Activated B cell treated with CpG ODN at 0.5 μM for 24 hours (primary cell): ENCODE measurements at regions of chr2 and their contacts with region 1.

Region 1: DNA sequence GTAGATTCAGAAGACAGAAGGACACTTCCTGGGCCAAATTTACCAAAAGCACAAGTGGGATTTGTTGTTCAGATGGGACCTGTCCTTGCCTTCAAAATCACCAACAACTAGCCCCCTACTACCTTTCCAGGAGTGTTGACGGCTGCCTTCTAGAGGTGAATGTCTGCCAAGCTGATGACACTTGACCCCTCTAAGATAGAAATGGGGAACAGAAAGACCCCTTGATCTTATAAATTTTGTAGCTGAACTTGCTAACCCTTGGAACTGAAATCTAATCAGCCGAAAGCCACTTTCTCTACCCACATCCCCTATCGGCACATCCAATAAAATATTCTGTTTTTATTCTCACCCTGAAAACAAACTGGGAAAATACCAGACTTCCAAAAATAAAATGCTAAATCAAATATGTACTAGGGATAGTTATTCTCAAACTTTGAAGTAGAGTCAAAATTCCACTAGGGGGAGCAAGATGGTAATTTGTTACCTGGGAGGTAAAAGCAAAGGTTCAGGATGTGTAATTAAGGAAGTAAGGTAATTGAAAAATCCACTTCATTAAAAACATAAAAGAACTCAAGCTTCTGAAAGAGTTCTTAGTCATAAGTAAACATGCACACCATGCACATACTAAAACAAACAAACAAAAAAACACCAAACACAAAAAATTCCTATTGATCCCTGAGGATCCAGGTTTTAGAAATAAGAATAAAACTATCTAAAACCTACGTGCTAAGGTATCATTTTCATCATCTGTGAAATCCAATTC is 119.2 kb downstream of the ANKRD44 start:
- DNase-seq: no peak
- ATAC-seq: peak; percentile 70
- H3K4me3 Mint-ChIP-seq: no peak overlapping the region
- H3K27ac Mint-ChIP-seq: peak overlapping the region; percentile 79
- H3K4me1 Mint-ChIP-seq: peaks cover 67% of the 10 kb centered on the region
- H3K27me3 Mint-ChIP-seq: no peaks in the 10 kb centered on the region
- CTCF ChIP-seq: peak; percentile 68

Region 2: DNA sequence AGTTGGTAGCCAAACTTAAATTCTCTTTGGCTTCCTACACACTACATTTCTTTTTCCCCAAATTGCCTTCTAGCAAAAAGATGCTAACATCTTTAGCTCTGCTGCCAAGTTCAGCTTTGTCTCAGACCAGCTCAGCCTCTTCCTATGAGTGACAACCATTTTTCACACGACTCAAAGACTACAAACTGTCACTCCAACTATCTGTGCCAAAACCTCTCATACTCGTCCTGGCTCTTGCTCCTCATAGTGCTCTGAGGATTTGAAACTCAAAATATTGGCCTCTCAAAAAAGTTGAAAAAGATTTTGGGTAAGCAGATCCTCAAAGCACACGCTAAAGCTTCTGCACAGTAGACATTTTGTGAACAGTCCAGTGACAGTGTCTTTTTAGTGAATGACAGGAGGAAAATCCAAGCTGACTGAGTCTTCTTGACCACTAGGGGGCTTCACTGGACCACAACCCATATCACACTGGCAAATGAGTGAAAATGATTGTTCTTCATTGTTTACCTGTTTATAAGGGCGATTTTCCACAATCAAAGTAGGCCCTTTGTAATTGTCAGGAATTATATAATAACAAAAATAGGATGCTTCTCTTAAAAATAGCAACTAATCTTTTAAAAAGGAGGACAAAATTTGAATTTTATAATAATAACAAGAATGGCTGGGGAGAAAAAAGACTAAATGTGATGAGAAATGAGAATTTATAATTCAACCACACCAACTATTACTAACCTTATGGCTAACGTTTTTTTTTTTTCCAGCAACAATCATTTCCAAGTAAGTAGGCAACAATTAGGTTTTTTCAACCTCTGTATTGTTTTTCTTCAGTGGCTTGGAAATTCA is 179.3 kb before region 1 on chr2:
- CTCF ChIA-PET with region 1: no interaction called
- POLR2A ChIA-PET with region 1: no interaction called
- intact Hi-C with region 1: loop called (anchors 5 kb)
- DNase-seq: no peak
- ATAC-seq: peak; percentile 57
- H3K4me3 Mint-ChIP-seq: no peak overlapping the region
- H3K27ac Mint-ChIP-seq: peak overlapping the region; percentile 74
- H3K4me1 Mint-ChIP-seq: peaks cover 5% of the 10 kb centered on the region
- H3K27me3 Mint-ChIP-seq: no peaks in the 10 kb centered on the region
- CTCF ChIP-seq: no peak

Region 3: DNA sequence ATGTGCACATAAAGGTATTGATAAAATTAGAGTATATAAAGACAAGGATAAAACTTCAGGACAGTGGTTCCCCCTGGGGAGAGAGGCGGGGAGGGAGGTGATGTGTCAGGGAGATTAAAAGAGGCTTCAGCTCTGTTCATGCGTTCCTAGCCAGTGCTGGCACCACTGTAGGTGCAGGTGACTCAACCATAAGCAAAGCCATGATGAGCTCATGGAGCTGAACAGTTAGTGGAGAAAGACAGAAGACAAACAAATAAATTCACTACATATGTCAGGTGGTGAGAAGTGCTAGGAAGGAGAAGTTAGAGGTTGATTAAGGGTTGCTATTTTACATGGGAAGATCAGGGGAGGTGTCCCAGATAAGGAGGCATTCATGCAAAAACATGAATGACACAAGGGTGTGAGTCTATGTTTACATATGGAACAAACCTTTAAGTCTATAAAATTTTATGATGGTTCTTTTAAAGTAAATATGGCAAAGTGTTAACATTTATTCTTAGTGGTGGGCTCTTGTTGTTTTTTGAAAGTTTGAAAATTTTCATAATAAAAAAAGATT is 16.7 kb before region 1 on chr2:
- CTCF ChIA-PET with region 1: interaction called, 9 read pairs
- POLR2A ChIA-PET with region 1: interaction called, 3 read pairs
- intact Hi-C with region 1: loop called (anchors 2 kb)
- DNase-seq: no peak
- ATAC-seq: peak; percentile 45
- H3K4me3 Mint-ChIP-seq: no peak overlapping the region
- H3K27ac Mint-ChIP-seq: peak overlapping the region; percentile 68
- H3K4me1 Mint-ChIP-seq: peaks cover 72% of the 10 kb centered on the region
- H3K27me3 Mint-ChIP-seq: no peaks in the 10 kb centered on the region
- CTCF ChIP-seq: no peak

Region 4: GRCh38 chr2:197255543-197255942 is 64.2 kb after region 1 on chr2:
- CTCF ChIA-PET with region 1: interaction called, 18 read pairs
- POLR2A ChIA-PET with region 1: interaction called, 11 read pairs
- intact Hi-C with region 1: no loop called
- DNase-seq: peak; percentile 74
- ATAC-seq: peak; percentile 95
- H3K4me3 Mint-ChIP-seq: peak overlapping the region; percentile 77
- H3K27ac Mint-ChIP-seq: peak overlapping the region; percentile 94
- H3K4me1 Mint-ChIP-seq: peaks cover 78% of the 10 kb centered on the region
- H3K27me3 Mint-ChIP-seq: no peaks in the 10 kb centered on the region
- CTCF ChIP-seq: no peak

Region 5: DNA sequence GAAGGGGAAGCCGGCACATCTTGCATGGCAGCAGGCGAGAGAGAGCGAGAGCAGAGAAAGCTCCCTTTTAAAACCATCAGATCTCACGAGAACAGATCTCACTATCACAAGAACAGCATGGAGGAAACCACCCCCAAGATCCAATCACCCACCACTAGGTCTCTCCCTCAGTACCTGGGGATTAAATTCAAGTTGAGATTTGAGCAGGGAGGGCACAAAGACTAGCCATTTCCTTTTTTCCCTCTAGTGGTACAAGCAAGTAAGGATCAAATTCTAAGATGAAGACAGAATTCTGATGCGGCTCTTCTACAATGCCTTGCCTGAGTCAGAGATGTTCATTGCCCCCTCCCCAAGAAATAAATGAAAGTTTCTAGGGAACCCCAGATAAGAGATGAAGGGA is 164.8 kb after region 1 on chr2:
- CTCF ChIA-PET with region 1: interaction called, 5 read pairs
- POLR2A ChIA-PET with region 1: no interaction called
- intact Hi-C with region 1: loop called (anchors 1 kb)
- DNase-seq: no peak
- ATAC-seq: peak; percentile 45
- H3K4me3 Mint-ChIP-seq: no peak overlapping the region
- H3K27ac Mint-ChIP-seq: no peak overlapping the region
- H3K4me1 Mint-ChIP-seq: no peaks in the 10 kb centered on the region
- H3K27me3 Mint-ChIP-seq: no peaks in the 10 kb centered on the region
- CTCF ChIP-seq: no peak

Region 6: DNA sequence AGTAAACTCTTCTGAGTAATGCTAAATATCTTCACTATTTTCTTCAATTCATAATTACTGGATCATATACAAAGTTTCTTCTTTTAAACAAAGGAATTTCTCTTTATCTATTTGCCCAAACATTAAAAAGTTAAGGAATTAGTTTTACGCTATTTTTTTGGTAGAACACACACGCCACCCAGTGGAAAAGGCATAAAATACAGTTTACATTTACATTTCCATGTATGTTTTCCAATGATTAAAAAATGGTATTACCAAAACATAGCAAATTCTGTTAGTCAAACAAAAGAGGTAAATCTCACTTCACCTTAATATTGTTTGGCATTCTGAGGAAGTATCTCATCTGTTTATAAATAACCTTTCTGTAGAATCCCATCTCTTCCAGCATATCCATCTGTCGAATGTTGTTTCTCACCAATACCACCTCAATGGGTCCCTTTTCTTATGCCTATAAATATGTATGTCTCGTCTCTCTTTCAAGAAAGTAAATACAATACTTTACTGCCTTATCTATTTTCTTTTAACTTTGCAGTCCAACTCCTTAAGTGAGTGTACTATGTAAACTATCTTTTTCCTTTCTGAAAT is 586.6 kb after region 1 on chr2:
- CTCF ChIA-PET with region 1: no interaction called
- POLR2A ChIA-PET with region 1: no interaction called
- intact Hi-C with region 1: loop called (anchors 5 kb)
- DNase-seq: no peak
- ATAC-seq: no peak
- H3K4me3 Mint-ChIP-seq: no peak overlapping the region
- H3K27ac Mint-ChIP-seq: no peak overlapping the region
- H3K4me1 Mint-ChIP-seq: no peaks in the 10 kb centered on the region
- H3K27me3 Mint-ChIP-seq: peaks cover 7% of the 10 kb centered on the region
- CTCF ChIP-seq: peak; percentile 23